Body of pancreas (tissue), 4 donors: ENCODE measurements at regions of chr17 and their contacts with region 1.

Region 1: DNA sequence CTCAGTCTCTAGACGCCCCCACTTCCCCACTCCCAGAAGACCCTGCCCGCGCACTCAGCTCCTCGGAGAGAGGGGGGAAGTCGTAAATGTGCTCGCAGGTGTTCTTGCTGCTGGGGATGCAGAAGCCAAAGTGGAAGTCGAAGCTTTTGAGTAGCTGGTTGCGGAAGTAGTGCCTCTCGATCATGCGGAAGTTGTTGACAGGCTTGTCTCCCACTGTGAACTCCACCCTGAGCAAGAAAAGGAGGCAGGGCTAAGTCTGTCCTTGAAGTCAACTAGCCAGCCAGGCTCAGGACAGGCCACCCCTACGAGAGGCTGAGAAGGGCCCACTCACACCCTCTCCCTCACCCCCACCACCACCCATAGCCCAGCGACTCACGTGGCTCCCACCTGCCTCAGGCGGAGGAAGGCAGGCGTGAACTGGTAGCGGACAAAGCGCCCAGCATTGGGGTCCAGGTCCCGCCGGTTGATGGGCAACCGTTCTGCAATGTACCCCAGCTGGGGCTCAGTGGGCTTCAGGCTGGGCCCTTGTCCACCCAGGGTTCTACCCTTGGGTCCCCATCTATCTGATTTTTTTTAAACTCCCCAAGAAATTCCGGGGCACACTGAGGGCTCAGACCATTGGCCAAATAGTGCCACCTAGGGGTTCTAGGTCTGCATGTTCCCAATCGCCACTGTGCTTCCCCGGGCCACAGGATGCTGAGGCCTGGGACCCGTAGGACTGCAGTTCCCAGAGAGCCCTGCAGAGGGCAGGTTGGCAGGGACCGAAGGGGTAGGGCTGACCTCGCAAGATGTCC is 4.6 kb downstream of the UNC119 start:
- DNase-seq: peak; percentile 76 to 83 (median 81)
- ATAC-seq: peak; percentile 68
- H3K4me3 ChIP-seq: no peak overlapping the region
- H3K27ac ChIP-seq: peak overlapping the region in 1 of 4 donors; percentile 16
- H3K4me1 ChIP-seq: peaks cover 18% of the 10 kb centered on the region
- H3K27me3 ChIP-seq: no peaks in the 10 kb centered on the region
- CTCF ChIP-seq: peak; percentile 80 to 93 (median 91)
- POLR2A ChIP-seq: no peak

Region 2: DNA sequence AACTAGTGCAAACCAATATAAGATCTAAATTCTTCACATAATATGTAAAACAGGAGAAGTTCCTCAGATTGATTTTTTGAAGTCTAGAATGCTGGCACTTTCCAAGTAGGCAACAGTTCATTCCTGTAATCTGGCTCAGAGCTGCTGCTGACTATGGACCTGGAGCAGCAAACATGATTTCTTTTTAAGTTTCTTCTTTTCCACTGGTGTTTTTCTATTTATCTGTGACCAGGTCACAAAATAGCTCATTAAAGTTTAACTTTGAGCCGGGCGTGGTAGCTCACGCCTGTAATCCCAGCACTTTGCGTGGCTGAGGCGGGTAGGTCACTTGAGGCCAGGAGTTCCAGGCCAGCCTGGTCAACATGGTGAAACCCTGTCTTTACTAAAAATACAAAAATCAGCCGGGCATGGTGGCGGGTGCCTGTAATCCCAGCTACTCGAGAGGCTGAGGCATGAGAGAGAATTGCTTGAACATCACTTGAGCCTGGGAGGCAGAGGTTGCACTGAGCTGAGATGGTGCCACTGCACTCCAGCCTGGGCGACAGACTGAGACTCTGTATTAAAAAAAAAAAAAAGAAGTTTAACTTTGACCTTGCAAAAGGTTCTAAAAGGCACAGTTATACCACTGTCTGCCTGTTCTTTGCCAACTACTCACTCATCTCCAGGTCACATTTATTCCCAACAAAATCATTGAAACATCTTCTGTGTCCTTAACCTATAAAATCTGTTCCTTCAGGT is 103.8 kb before region 1 on chr17:
- intact Hi-C with region 1: no loop called
- DNase-seq: no peak
- ATAC-seq: no peak
- H3K4me3 ChIP-seq: no peak overlapping the region
- H3K27ac ChIP-seq: no peak overlapping the region
- H3K4me1 ChIP-seq: no peaks in the 10 kb centered on the region
- H3K27me3 ChIP-seq: no peaks in the 10 kb centered on the region
- CTCF ChIP-seq: no peak
- POLR2A ChIP-seq: no peak

Region 3: GRCh38 chr17:28492352-28493310 is 55.2 kb before region 1 on chr17:
- intact Hi-C with region 1: loop called (anchors 2 kb)
- DNase-seq: no peak
- ATAC-seq: no peak
- H3K4me3 ChIP-seq: no peak overlapping the region
- H3K27ac ChIP-seq: no peak overlapping the region
- H3K4me1 ChIP-seq: peaks cover 32% of the 10 kb centered on the region
- H3K27me3 ChIP-seq: no peaks in the 10 kb centered on the region
- CTCF ChIP-seq: no peak
- POLR2A ChIP-seq: no peak

Region 4: GRCh38 chr17:28503420-28503819 is 44.4 kb before region 1 on chr17:
- intact Hi-C with region 1: no loop called
- DNase-seq: no peak
- ATAC-seq: no peak
- H3K4me3 ChIP-seq: no peak overlapping the region
- H3K27ac ChIP-seq: no peak overlapping the region
- H3K4me1 ChIP-seq: peaks cover 10% of the 10 kb centered on the region
- H3K27me3 ChIP-seq: no peaks in the 10 kb centered on the region
- CTCF ChIP-seq: no peak
- POLR2A ChIP-seq: no peak